ENCODE measurements at regions of chr16 and their contacts with region 1.

Region 1: GRCh38 chr16:58843675-58844074 is 109.6 kb upstream of the GOT2 start:
- DNase-seq: no peak
- H3K4me3 ChIP-seq: no peak overlapping the region
- H3K27ac ChIP-seq: no peak overlapping the region
- H3K4me1 ChIP-seq: no peaks in the 10 kb centered on the region
- H3K27me3 ChIP-seq: no peaks in the 10 kb centered on the region
- CTCF ChIP-seq: peak in 1 of 3 experiments; percentile 13; a peak in 2 of 4 replicates
- EP300 ChIP-seq: no peak
- POLR2A ChIP-seq: no peak
- RAD21 ChIP-seq: peak; percentile 75 to 78

Region 2: DNA sequence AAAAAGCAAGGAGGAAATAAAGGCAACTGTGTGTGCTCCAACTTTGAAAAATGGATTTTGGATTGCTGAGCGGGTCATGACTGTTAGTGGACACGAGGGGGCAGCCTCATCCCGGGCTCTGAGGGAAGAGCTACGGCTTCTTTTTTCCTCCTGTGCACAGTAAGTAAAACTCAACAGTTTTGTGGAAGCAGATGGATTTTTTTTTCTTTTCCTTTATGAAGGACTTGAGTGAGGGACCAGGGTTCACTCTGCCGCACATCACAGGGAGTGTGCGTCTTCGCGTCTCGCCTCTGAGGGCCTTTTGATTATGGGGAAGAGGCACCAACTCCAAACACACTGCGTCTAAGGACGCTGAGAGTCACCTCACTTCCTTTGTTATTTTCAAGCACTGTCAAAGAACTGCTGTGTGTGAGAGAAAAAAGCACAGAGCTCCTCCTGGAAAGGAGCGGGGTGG is 29.3 kb before region 1 on chr16:
- CTCF ChIA-PET with region 1: interaction called, 11 read pairs
- POLR2A ChIA-PET with region 1: no interaction called
- DNase-seq: peak; percentile 13 to 65
- H3K4me3 ChIP-seq: peak overlapping the region in 3 of 4 experiments; percentile 31 to 50 (median 41); a peak in 5 of 8 replicates
- H3K27ac ChIP-seq: no peak overlapping the region
- H3K4me1 ChIP-seq: peaks cover 0 to 3% (median 0%) of the 10 kb centered on the region in 4 experiments; a peak in 2 of 7 replicates
- H3K27me3 ChIP-seq: no peaks in the 10 kb centered on the region
- CTCF ChIP-seq: peak; percentile 68 to 89 (median 77)
- EP300 ChIP-seq: no peak
- POLR2A ChIP-seq: no peak
- RAD21 ChIP-seq: peak; percentile 91 to 93

Region 3: DNA sequence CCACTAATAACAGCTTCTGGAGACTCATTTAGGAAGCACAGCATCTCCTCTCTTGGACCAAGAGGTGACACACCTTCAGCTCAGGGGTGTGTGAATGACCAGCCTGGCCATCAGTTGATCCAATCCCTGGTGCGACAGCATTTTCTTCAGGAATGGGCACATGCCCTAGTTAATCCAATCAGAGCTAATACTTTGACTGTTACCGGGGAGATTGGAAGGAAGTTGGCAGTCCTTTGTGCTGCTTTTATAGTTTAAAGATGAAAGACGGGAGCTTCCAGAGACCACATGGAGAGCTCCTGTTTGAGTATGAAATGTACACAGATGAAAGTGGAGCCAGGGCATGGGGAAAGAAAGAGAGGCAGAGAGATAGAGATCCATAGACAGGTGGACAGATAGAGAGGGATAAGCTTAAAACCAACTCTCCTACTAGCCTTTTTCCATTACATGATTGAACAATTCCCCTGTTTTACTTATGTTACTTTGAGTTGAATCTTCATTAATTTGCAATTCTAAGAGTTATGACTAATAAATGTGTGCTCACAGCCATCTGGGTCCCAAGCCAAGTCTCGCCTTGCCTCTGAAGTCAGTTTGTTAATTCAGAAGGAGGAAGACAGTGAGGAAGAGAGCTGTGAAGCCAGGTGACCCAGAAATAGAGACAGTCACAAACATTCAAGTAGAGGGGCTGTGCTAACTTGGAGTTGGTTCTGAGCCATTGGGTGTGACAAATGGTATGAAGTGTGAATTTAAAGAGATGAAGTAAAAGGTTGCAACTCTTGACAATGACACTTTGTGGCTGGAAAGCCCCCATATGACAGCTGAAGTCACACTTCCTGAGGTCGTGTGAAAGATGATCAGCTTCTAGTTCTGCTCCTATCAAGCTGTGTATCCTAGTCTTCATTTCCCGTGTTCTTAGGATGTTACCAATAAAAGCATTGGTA is 10.4 kb after region 1 on chr16:
- CTCF ChIA-PET with region 1: interaction called, 25 read pairs
- POLR2A ChIA-PET with region 1: no interaction called
- DNase-seq: no peak
- H3K4me3 ChIP-seq: no peak overlapping the region
- H3K27ac ChIP-seq: no peak overlapping the region
- H3K4me1 ChIP-seq: no peaks in the 10 kb centered on the region
- H3K27me3 ChIP-seq: peaks cover 0 to 1% (median 0%) of the 10 kb centered on the region in 4 experiments; a peak in 1 of 7 replicates
- CTCF ChIP-seq: no peak
- EP300 ChIP-seq: no peak
- POLR2A ChIP-seq: no peak
- RAD21 ChIP-seq: no peak

Region 4: GRCh38 chr16:59249011-59249410 is 405.3 kb after region 1 on chr16:
- CTCF ChIA-PET with region 1: interaction called, 12 read pairs
- POLR2A ChIA-PET with region 1: no interaction called
- DNase-seq: peak; percentile 13 to 52
- H3K4me3 ChIP-seq: no peak overlapping the region
- H3K27ac ChIP-seq: no peak overlapping the region
- H3K4me1 ChIP-seq: peaks cover 0 to 4% (median 0%) of the 10 kb centered on the region in 4 experiments; a peak in 1 of 7 replicates
- H3K27me3 ChIP-seq: no peaks in the 10 kb centered on the region
- CTCF ChIP-seq: peak; percentile 52 to 64 (median 57)
- EP300 ChIP-seq: no peak
- POLR2A ChIP-seq: no peak
- RAD21 ChIP-seq: peak; percentile 82 to 87